GM18951 (cell line): ENCODE measurements at regions of chr1 and their contacts with region 1.

Region 1: GRCh38 chr1:28208818-28209441 is 23.9 kb downstream of the DNAJC8 start:
- POLR2A ChIP-seq: no peak

Region 2: DNA sequence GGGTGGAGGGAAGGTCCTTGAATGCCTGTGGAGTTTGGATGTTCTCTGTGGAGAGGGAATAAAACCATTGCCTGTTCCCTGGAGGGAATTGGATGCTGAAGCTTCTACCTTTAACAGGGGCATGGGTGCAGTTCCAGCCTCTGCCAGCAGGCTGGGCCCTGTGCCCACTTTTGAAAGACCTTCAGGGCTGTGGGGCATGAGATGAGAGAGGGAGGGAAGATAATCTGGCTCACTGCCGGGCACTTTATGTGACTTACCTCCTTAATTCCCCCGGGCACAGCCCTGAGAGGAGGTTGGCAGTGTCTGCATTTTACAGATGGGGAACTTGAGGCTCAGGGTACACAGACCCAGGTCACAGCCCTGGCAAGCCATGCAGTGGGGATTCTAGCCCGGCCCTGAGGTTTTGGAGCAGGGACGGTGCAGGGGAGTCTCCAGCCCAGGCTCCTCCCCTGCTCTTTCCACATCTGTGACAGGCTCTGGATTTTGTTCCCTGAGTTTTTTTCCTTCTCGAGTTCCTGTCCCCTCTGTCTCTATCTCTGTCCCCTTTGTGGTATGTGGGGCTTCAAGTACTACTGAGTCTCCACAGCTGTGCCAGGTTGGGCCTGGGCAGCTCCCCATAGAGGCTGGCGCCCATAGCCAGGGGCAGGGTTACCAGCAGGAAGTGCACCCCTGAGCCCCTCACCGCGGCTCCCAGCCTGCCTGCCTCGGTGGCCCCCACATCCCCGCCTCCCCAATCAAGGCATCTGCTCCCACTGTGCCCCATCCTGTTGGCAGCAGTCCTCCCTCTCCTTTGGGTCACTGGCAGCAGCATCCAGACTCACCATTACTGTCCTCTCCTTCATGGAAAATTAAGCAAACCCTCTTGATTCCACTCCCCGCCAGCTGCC is 350.6 kb before region 1 on chr1:
- in situ Hi-C with region 1: loop called (anchors 25 kb)
- POLR2A ChIP-seq: no peak

Region 3: DNA sequence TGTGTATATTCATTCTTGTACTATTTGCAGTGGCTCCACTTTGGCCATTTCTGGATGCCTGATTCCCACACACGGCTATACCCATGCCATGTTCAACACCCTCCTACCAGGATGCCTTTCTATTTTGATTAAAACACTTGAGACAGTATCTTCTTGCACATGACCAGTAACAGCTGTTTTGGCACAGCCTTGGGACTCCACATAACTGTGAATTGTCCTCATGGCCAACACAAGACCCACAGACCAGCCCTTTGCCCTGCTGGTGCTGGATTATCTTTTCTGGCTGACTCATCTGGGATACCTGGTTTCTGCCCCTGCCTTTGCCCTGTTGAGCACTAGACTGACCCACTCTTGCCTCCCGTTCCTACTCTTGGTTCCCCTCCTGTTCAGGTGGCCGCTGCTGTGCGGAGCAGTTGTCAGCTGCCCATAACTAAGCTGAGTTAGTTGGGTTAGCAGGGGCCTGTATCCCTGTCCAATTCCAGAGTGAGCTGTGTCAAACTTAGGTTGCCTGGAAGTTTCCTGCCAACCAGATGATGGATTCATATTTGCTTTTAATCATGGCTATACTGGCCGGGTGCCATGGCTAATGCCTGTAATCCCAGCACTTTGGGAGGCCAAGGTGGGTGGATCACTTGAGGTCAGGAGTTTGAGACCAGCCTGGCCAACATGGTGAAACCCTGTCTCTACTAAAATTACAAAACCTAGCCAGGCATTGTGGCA is 109.7 kb before region 1 on chr1:
- in situ Hi-C with region 1: loop called (anchors 5 kb)
- POLR2A ChIP-seq: no peak